ENCODE measurements at regions of chr1 and their contacts with region 1.

Region 1: GRCh38 chr1:211698161-211699026 is 23.0 kb upstream of the NEK2 start:
- DNase-seq: peak; percentile 69
- ATAC-seq: peak; percentile 98
- H3K4me3 ChIP-seq: 0 out of 4 replicates have a peak overlapping the region, but pooled peaks of 1 of the 2 experiments have one; percentile 11
- H3K27ac ChIP-seq: no peak overlapping the region
- H3K4me1 ChIP-seq: peaks cover 0 to 12% of the 10 kb centered on the region in 2 experiments; a peak in 2 of 4 replicates
- H3K27me3 ChIP-seq: no peaks in the 10 kb centered on the region
- CTCF ChIP-seq: peak; percentile 99
- POLR2A ChIP-seq: no peak
- RAD21 ChIP-seq: peak; percentile 99

Region 2: DNA sequence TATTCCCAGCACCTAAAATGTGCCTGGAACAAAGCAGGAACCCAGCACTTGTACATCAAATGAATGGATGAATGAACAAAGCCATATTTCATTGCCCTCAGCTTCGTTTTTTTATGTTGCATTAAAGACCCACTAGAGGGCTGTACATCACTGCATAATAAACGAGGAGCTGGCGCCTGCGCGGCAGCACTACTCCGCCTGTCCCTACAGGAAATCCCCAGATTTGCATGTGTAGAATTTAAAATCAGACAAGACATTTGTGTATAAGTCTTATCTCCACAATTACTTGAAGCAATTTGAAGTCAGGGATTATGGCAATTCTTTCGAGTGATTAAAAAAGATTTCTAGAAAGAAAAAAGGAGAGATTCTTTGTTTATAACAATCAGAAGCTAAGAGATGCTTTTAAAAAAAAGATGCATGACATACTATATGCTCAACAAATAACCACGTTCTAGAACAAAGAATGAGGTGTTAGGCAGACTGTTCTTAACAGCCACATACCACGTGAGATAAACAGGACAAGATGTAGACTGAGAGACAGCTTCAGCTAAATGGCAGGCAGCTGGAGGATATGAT is 17.6 kb before region 1 on chr1:
- CTCF ChIA-PET with region 1: interaction called, 18 read pairs
- POLR2A ChIA-PET with region 1: no interaction called
- RAD21 ChIA-PET with region 1: interaction called in 1 of 2 experiments, 3 read pairs
- intact Hi-C with region 1: no loop called
- DNase-seq: peak; percentile 85
- ATAC-seq: peak; percentile 88
- H3K4me3 ChIP-seq: no peak overlapping the region
- H3K27ac ChIP-seq: no peak overlapping the region
- H3K4me1 ChIP-seq: peaks cover 0 to 13% of the 10 kb centered on the region in 2 experiments; a peak in 3 of 4 replicates
- H3K27me3 ChIP-seq: no peaks in the 10 kb centered on the region
- CTCF ChIP-seq: peak; percentile 64 to 94 (median 75)
- POLR2A ChIP-seq: no peak
- RAD21 ChIP-seq: peak; percentile 97

Region 3: DNA sequence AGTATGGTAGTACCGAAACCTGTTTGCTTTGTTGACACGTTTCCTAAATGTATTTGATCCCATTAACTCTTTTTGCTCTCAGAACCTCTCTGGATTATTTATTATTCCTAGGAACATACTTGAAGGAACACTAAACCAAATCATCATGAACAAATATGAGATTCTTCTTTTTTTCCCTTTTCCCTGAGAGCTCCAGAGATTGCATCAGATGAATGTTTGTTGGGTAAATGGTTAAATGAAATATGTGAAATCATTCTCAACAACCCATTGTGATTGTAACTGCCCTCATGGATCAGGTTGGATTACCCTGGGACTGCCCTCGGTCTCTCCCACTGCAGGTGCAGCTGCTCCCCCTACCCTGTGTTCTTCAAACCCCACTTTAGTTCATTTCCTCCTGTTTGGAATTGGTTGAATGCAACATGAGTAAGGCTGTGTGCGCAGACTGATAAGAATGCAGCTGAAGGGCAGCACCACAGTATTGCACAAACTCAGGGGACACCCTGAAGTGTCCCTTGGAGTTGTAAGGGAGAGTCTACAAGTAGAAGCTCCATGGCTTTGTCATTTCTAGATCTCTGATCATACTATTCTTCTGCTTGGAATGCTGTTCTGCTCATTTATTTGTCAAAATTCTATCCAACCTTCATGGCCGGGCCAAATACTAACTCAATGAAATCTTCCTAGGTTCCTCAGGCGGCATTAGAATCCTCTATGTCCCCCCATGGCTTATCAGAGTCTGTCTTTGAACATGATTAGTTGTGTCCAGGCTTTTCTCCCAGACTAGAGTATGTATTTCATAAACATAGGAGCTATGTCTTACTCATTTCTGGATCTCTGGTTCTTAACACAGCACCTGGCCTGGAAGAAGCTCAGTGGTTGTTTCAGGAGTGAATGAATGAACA is 24.1 kb after region 1 on chr1:
- CTCF ChIA-PET with region 1: no interaction called
- POLR2A ChIA-PET with region 1: no interaction called
- RAD21 ChIA-PET with region 1: no interaction called
- intact Hi-C with region 1: no loop called
- DNase-seq: no peak
- ATAC-seq: no peak
- H3K4me3 ChIP-seq: no peak overlapping the region
- H3K27ac ChIP-seq: no peak overlapping the region
- H3K4me1 ChIP-seq: no peaks in the 10 kb centered on the region
- H3K27me3 ChIP-seq: no peaks in the 10 kb centered on the region; the same call in 1 of the 2 replicates
- CTCF ChIP-seq: no peak
- POLR2A ChIP-seq: no peak
- RAD21 ChIP-seq: no peak

Region 4: DNA sequence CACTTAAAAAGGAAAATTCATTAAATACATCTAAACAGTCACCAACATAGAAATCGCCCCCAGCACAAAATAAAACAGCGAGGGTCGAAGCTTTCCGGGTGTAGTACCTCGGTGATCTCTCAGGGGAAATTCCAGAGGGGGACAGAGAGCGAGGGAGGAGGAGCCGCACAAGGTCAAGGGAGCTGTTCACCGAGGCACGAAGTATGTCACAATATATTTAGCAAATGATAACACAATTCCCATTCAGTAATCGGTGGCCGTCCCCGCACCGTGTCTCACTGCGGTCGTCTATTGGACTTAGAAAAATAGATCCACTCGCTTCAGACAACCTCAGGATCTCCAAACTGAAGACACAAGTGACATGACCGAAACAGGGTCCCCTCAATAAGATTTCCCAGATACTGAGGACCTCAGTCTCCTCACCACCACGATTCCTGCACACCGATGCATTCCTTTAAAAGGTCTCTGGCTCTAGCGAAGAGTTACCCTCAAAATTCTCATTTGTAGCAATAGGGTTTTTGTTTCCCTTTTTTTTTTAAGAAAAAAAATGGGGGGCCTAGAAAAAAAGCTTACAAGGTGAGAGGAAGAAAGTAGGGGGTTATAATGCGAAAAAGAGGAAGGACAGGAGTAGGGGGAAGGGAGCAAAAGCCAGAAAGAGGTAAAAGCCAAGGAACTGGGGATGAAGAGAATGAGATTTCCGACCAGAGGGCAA is 131.1 kb after region 1 on chr1:
- CTCF ChIA-PET with region 1: interaction called, 3 read pairs
- POLR2A ChIA-PET with region 1: no interaction called
- RAD21 ChIA-PET with region 1: no interaction called
- intact Hi-C with region 1: loop called (anchors 5 kb)
- DNase-seq: no peak
- ATAC-seq: no peak
- H3K4me3 ChIP-seq: peak overlapping the region; percentile 62 to 72
- H3K27ac ChIP-seq: peak overlapping the region; percentile 67; the same call in 1 of the 2 replicates
- H3K4me1 ChIP-seq: peaks cover 0 to 20% of the 10 kb centered on the region in 2 experiments; a peak in 2 of 4 replicates
- H3K27me3 ChIP-seq: no peaks in the 10 kb centered on the region
- CTCF ChIP-seq: no peak
- POLR2A ChIP-seq: no peak
- RAD21 ChIP-seq: no peak

Region 5: DNA sequence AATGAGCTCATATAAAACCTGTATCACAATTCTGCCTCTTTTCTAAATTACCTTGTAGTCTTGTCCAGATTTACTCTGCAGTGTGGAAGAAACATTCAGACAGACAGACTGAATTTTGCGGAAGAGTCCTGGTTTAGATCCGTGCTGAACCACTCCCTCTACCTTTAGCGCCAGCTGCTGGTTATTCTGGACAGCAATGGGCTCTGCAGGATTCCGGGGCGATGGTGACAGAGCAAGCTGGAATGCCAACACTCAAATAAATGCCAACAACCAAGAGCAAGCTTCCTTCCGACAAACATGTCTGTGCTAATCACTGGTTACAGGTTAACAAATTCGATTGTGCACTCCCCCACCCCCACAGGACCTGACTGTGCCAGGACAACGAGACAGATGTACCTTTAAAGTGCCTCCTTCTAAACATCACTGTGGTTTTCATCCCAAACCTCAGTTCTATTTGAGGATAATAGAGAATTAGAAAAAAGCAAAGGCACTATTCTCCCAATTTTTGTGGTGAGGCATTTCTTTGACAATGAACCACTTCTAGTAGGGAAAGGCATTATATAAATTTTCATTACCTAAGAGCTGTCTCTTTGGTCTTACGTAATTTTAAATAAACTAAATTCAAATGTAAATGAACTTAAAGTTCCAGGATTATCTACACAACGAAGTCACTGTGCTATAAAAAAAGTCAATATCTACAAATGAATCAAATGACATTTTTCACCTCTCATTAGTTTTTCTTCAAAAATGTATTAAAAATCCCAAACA is 246.5 kb after region 1 on chr1:
- CTCF ChIA-PET with region 1: interaction called, 4 read pairs
- POLR2A ChIA-PET with region 1: no interaction called
- RAD21 ChIA-PET with region 1: interaction called in 1 of 2 experiments, 3 read pairs
- intact Hi-C with region 1: loop called (anchors 1 kb)
- DNase-seq: no peak
- ATAC-seq: peak; percentile 84
- H3K4me3 ChIP-seq: no peak overlapping the region
- H3K27ac ChIP-seq: no peak overlapping the region
- H3K4me1 ChIP-seq: no peaks in the 10 kb centered on the region
- H3K27me3 ChIP-seq: no peaks in the 10 kb centered on the region
- CTCF ChIP-seq: peak; percentile 28 to 52 (median 48); a peak in 5 of 6 replicates
- POLR2A ChIP-seq: no peak
- RAD21 ChIP-seq: peak; percentile 49

Region 6: DNA sequence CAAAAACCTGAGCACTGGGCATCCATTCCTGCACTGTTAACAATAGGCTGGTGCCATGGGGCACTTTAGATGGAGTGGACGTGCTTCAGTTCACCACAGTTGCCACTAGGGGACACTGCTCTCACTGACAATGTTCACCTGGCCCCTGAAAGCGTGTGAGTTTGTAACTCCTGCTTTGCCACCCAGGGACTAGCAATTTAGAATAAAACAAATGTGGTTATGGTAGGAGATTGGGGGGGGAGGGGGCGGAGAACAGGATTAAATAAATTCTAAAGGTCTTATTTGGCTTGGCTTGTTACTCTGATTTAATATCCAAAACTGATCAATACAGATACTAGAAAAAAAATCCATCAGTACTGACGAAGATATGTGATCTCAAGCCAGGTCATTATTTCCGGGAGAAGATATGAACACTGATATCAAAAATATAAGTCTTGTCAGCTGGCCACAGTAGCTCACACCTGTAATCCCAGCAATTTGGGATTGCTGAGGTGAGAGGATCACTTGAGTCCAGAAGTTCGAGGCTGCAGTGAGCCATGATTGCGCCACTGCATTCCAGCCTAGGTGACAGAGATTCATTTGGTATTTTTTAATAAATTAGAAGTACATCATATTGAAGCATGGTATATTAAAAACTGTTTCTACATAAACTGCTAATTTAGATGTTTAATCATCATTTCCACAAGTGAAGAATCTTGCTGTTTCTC is 313.8 kb after region 1 on chr1:
- CTCF ChIA-PET with region 1: no interaction called
- POLR2A ChIA-PET with region 1: no interaction called
- RAD21 ChIA-PET with region 1: no interaction called
- intact Hi-C with region 1: loop called (anchors 1 kb)
- DNase-seq: peak; percentile 37
- ATAC-seq: peak; percentile 100
- H3K4me3 ChIP-seq: no peak overlapping the region
- H3K27ac ChIP-seq: no peak overlapping the region
- H3K4me1 ChIP-seq: no peaks in the 10 kb centered on the region
- H3K27me3 ChIP-seq: no peaks in the 10 kb centered on the region
- CTCF ChIP-seq: peak; percentile 85 to 99 (median 96)
- POLR2A ChIP-seq: no peak
- RAD21 ChIP-seq: peak; percentile 90

Measured in HCT116 (cell line).